Activated CD4-positive, alpha-beta T cell treated with anti-CD3 and anti-CD28 coated beads, Interleukin-2, amount 10 ng/mL, durations not matched to agents 7 days and 5 days (primary cell): ENCODE measurements at regions of chr1 and their contacts with region 1.

Region 1: GRCh38 chr1:8314346-8315280 is 3.3 kb upstream of the SLC45A1 start:
- DNase-seq: peak; percentile 48
- H3K4me3 Mint-ChIP-seq: no peak overlapping the region
- H3K27ac Mint-ChIP-seq: no peak overlapping the region
- H3K4me1 Mint-ChIP-seq: peaks cover 18% of the 10 kb centered on the region
- H3K27me3 Mint-ChIP-seq: peaks cover 26% of the 10 kb centered on the region

Region 2: GRCh38 chr1:8015036-8015808 is 299.4 kb before region 1 on chr1:
- CTCF ChIA-PET with region 1: interaction called, 10 read pairs
- POLR2A ChIA-PET with region 1: interaction called, 4 read pairs
- DNase-seq: peak; percentile 68
- H3K4me3 Mint-ChIP-seq: no peak overlapping the region
- H3K27ac Mint-ChIP-seq: no peak overlapping the region
- H3K4me1 Mint-ChIP-seq: no peaks in the 10 kb centered on the region
- H3K27me3 Mint-ChIP-seq: peaks cover 22% of the 10 kb centered on the region

Region 3: GRCh38 chr1:8302081-8302956 is 12.3 kb before region 1 on chr1:
- CTCF ChIA-PET with region 1: interaction called, 16 read pairs
- POLR2A ChIA-PET with region 1: no interaction called
- DNase-seq: no peak
- H3K4me3 Mint-ChIP-seq: no peak overlapping the region
- H3K27ac Mint-ChIP-seq: no peak overlapping the region
- H3K4me1 Mint-ChIP-seq: no peaks in the 10 kb centered on the region
- H3K27me3 Mint-ChIP-seq: peaks cover 2% of the 10 kb centered on the region

Region 4: GRCh38 chr1:8358904-8359603 is 44.4 kb after region 1 on chr1:
- CTCF ChIA-PET with region 1: no interaction called
- POLR2A ChIA-PET with region 1: no interaction called
- DNase-seq: no peak
- H3K4me3 Mint-ChIP-seq: no peak overlapping the region
- H3K27ac Mint-ChIP-seq: no peak overlapping the region
- H3K4me1 Mint-ChIP-seq: no peaks in the 10 kb centered on the region
- H3K27me3 Mint-ChIP-seq: no peaks in the 10 kb centered on the region